Activated CD4-positive, alpha-beta T cell treated with anti-CD3 and anti-CD28 coated beads for 36 hours (primary cell): ENCODE measurements at regions of chr14 and their contacts with region 1.

Region 1: DNA sequence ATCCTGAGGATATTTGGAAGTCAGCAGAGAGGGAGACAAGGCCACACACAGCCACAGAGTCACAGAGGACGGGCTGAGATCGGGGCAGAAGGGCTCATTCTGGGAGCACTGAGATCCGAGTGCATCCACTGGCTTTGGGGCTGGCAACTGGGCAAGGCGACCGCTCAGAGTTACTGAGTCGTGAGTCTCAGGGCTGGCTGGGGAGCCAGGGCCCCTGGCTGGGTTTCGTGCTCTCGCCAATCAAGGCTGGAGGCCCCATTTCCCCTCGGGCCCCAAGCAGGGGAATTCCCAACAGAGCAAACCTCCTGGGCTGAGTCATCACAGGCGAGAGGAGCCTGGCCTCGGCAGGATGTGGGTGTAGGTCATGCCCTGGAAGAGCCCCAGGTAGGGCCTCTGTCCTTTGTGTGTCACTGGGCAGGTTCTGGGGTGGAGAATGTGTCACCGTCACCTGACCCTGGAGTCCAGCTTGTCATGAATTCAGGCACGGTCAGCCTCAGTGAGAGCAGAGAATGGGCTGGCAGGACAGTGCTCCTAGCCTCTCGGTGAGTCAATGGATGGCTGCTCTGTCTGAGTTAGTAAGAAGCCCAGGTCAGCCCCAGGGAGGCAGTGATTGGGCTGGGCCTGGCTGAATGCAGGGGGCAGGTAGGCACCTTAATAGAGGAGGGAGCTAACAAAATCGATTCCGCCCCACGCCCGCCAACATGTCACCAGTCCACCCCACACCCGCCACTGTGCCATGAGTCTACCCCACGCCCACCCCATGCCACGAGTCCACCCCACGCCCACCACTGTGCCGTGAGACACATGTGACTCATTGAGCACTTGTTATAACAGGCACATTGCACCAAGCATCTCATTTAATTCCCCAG is 16.9 kb downstream of the ASB2 start:
- DNase-seq: peak; percentile 97
- ATAC-seq: peak; percentile 74
- H3K4me3 Mint-ChIP-seq: peak overlapping the region; percentile 70
- H3K27ac Mint-ChIP-seq: peak overlapping the region; percentile 100
- H3K4me1 Mint-ChIP-seq: peaks cover 96% of the 10 kb centered on the region
- H3K27me3 Mint-ChIP-seq: no peaks in the 10 kb centered on the region

Region 2: GRCh38 chr14:93332853-93333630 is 626.4 kb before region 1 on chr14 and contains the start of gene BTBD7:
- CTCF ChIA-PET with region 1: no interaction called
- POLR2A ChIA-PET with region 1: no interaction called
- intact Hi-C with region 1: loop called in 1 of 2 experiments (anchors 2 kb)
- DNase-seq: peak; percentile 97
- ATAC-seq: peak; percentile 94
- H3K4me3 Mint-ChIP-seq: peak within 1 kb of the TSS; percentile 90
- H3K27ac Mint-ChIP-seq: peak within 1 kb of the TSS; percentile 88
- H3K4me1 Mint-ChIP-seq: peaks cover 46% of the 10 kb centered on the region
- H3K27me3 Mint-ChIP-seq: no peaks in the 10 kb centered on the region
- total RNA-seq, gene BTBD7: 6.5 to 9.5 TPM

Region 3: GRCh38 chr14:93645200-93645599 is 314.3 kb before region 1 on chr14:
- CTCF ChIA-PET with region 1: no interaction called
- POLR2A ChIA-PET with region 1: no interaction called
- intact Hi-C with region 1: no loop called
- DNase-seq: no peak
- ATAC-seq: no peak
- H3K4me3 Mint-ChIP-seq: no peak overlapping the region
- H3K27ac Mint-ChIP-seq: no peak overlapping the region
- H3K4me1 Mint-ChIP-seq: peaks cover 21% of the 10 kb centered on the region
- H3K27me3 Mint-ChIP-seq: peaks cover 33% of the 10 kb centered on the region

Region 4: GRCh38 chr14:93862265-93862955 is 97.1 kb before region 1 on chr14:
- CTCF ChIA-PET with region 1: no interaction called
- POLR2A ChIA-PET with region 1: no interaction called
- intact Hi-C with region 1: no loop called
- DNase-seq: no peak
- ATAC-seq: no peak
- H3K4me3 Mint-ChIP-seq: no peak overlapping the region
- H3K27ac Mint-ChIP-seq: no peak overlapping the region
- H3K4me1 Mint-ChIP-seq: no peaks in the 10 kb centered on the region
- H3K27me3 Mint-ChIP-seq: peaks cover 17% of the 10 kb centered on the region

Region 5: GRCh38 chr14:93975791-93976476 is 16.5 kb after region 1 on chr14:
- CTCF ChIA-PET with region 1: interaction called, 51 read pairs
- POLR2A ChIA-PET with region 1: interaction called, 48 read pairs
- intact Hi-C with region 1: loop called (anchors 1 kb)
- DNase-seq: peak; percentile 69
- ATAC-seq: peak; percentile 51
- H3K4me3 Mint-ChIP-seq: peak overlapping the region; percentile 64
- H3K27ac Mint-ChIP-seq: peak overlapping the region; percentile 97
- H3K4me1 Mint-ChIP-seq: peaks cover 89% of the 10 kb centered on the region
- H3K27me3 Mint-ChIP-seq: no peaks in the 10 kb centered on the region

Region 6: DNA sequence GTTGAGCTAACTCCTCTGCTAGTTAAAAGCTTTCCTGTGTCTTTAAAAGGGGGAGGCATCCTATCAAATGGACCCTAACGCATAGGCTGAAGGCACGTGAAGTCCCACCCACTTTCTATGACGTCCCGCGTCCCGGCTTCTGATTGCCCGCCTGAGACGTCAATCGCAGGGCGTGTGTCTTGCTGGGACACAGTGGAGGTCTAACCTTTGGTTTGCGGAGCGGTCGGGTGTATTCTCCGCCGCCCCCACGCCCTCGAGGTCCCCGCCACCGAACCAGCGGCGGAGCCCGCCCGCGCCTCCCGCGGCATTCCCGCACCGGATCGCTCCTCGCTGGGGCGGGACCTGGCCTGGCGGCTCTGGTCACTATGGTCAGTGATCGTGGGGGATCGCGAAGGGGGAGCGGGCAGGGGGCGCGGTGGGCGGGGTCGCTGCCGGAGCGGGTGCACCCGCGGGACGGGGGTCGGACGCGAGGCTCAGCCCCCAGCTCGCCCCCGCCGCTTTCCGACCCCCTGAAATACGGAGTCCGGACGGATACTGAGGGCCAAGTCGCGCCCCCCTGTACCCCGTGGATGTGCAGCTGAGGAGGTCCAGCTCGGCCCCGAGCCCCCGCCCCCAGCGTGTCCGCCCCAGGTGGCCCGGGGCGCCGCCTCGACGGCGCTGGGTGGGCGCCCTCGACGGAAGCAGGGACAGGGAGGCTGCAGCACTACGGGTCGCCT is 66.9 kb after region 1 on chr14 and contains the start of gene OTUB2:
- CTCF ChIA-PET with region 1: no interaction called
- POLR2A ChIA-PET with region 1: no interaction called
- intact Hi-C with region 1: loop called in 1 of 2 experiments (anchors 1 kb)
- DNase-seq: peak; percentile 98
- ATAC-seq: peak; percentile 99
- H3K4me3 Mint-ChIP-seq: peak within 1 kb of the TSS; percentile 54
- H3K27ac Mint-ChIP-seq: no peak within 1 kb of the TSS
- H3K4me1 Mint-ChIP-seq: peaks cover 32% of the 10 kb centered on the region
- H3K27me3 Mint-ChIP-seq: no peaks in the 10 kb centered on the region
- total RNA-seq, gene OTUB2: 0.75 to 0.93 TPM

Region 7: DNA sequence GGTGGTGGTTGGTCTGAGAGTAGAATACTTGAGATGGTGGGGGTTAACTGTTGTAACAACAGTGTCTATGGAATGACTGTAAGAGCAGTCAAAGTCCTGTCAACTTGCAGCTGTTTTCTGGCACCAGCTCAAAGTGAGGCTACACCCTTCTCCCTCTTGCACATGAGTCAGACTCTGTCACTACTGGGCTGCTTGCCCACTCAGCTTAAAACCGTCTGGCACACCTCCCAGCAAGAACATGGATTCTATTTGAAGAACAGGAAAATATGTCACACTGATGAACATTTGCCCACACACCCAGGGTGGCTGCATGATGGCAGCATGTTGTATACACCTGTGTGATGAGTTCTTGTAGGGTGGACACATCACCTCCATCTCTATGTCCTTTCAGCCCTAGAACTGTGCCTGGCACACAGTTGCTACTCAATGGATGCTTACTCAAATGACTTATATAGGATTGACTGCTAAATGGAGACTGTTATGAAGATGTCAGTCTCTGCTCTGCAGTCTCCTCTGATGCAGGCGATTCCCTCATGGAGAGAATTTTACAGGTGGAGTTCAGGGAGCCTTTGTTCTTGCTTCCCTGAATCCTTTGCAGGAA is 383.0 kb after region 1 on chr14:
- CTCF ChIA-PET with region 1: no interaction called
- POLR2A ChIA-PET with region 1: interaction called, 4 read pairs
- intact Hi-C with region 1: loop called (anchors 5 to 10 kb)
- DNase-seq: peak; percentile 77
- ATAC-seq: peak; percentile 71
- H3K4me3 Mint-ChIP-seq: no peak overlapping the region
- H3K27ac Mint-ChIP-seq: peak overlapping the region; percentile 93
- H3K4me1 Mint-ChIP-seq: peaks cover 79% of the 10 kb centered on the region
- H3K27me3 Mint-ChIP-seq: peaks cover 2% of the 10 kb centered on the region

Region 8: GRCh38 chr14:95527387-95528002 is 1568.0 kb after region 1 on chr14:
- CTCF ChIA-PET with region 1: no interaction called
- POLR2A ChIA-PET with region 1: no interaction called
- intact Hi-C with region 1: loop called in 1 of 2 experiments (anchors 10 kb)
- DNase-seq: peak; percentile 76
- ATAC-seq: no peak
- H3K4me3 Mint-ChIP-seq: no peak overlapping the region
- H3K27ac Mint-ChIP-seq: peak overlapping the region; percentile 90
- H3K4me1 Mint-ChIP-seq: peaks cover 81% of the 10 kb centered on the region
- H3K27me3 Mint-ChIP-seq: no peaks in the 10 kb centered on the region